OCI-LY7 (cell line): ENCODE measurements at regions of chr20 and their contacts with region 1.

Region 1: GRCh38 chr20:48002227-48002970 is 217.1 kb upstream of the SULF2 start:
- DNase-seq: peak; percentile 93
- H3K4me3 ChIP-seq: peak overlapping the region; percentile 55
- H3K27ac ChIP-seq: peak overlapping the region; percentile 99
- H3K4me1 ChIP-seq: peaks cover 59% of the 10 kb centered on the region
- CTCF ChIP-seq: no peak

Region 2: DNA sequence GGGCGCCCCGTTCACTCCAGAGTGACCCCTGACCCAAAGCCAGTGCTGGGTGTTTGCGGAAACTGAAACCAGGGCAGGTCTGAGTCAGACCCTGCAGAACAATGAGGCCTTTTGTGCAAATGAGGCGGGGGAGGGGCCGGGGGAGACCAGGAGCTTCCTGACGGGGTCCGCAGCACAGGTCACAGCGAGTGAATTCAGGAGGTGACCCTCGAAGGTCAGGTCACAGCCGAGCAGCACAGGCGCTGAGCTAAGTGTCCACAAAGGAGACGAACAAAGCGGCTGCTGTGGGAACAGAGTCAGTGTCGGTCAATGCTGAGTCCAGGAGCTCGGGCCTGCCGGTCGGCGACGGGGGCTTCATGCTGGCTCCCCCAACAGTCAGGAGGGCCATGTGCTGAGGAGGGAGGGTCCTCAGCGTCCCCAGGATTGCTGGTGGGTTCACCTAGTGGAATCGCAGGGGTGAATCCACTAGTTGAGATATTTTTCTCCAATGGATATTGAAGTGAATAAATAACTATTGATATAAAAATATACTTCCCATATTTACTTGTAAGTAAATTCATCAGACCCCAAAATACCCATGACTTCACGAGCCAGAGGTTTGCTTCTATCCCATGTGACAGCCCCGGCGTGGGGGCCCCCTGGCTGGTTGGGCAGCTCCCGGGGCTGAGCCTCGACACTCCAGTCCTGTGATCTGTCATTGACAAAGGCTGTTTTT is 28.7 kb before region 1 on chr20:
- CTCF ChIA-PET with region 1: no interaction called
- POLR2A ChIA-PET with region 1: interaction called, 11 read pairs
- intact Hi-C with region 1: loop called (anchors 1 kb)
- DNase-seq: no peak
- H3K4me3 ChIP-seq: no peak overlapping the region
- H3K27ac ChIP-seq: no peak overlapping the region
- H3K4me1 ChIP-seq: peaks cover 64% of the 10 kb centered on the region
- CTCF ChIP-seq: no peak

Region 3: DNA sequence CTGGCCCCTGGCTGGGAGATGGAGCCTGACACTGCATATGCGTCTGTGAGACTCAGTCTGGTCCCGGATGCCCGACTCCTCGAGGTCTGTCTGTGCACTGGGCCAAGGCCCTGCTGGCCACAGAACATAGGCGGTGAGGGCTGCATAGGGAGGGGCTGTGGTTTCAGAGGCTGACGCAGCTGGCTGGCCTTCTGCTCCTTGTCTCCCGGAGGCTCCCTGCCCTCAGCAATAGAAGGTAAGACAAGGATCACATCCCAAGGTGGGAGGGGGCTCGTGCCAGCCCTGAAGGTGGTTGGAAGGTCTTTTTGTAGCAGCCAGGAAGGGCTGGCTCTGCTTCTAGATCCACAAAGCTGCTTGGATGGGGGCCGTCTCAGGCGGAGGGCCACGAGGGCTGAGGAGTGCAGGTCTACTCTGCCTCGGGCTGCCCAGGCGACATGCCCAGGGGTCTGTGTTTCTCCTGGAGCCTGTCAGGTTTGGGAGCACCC is 22.7 kb after region 1 on chr20:
- CTCF ChIA-PET with region 1: no interaction called
- POLR2A ChIA-PET with region 1: interaction called, 3 read pairs
- intact Hi-C with region 1: loop called (anchors 2 kb)
- DNase-seq: peak; percentile 15
- H3K4me3 ChIP-seq: peak overlapping the region; percentile 27
- H3K27ac ChIP-seq: no peak overlapping the region
- H3K4me1 ChIP-seq: peaks cover 40% of the 10 kb centered on the region
- CTCF ChIP-seq: no peak